HEK293 (cell line): ENCODE measurements at regions of chr17 and their contacts with region 1.

Region 1: DNA sequence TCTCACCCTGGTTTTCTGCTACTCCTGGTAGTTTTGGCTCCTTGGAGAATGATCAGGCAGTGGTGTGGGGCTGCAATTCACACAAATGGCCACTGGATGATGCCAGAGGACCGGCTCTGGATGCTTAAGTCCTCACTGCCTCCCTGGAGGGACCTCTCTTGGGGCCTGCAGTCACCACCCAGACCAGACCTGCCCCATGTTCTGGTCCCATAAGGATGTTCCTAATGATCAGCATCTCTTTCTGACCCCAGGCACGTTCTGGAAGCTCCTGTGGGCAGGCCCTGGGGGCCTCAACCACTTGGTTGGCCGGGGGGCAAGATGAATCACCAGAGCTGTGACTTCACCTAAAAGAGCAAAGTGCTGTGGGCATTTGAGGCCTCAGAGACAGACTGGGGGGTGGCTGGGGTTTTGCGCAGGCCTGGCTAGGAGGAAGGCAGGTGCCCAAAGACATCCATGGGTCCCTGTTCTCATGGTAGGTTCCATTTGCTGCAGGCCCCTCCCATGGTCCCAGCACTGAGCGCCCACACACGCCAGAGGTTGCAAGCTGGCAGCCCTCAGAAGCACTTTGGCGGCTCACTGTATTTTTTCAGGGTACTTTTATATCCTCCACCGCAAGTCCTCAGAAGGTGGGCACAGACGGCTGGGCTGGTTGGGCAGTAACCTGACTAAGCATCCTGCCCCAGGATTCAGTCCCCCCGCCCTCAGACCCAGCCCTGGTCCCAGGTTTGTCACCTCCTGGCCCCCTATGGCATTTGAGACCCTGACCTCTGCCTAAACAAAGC is 53.2 kb downstream of the NT5M start:
- H3K4me3 ChIP-seq: no peak overlapping the region
- H3K27ac ChIP-seq: no peak overlapping the region
- H3K4me1 ChIP-seq: no peaks in the 10 kb centered on the region
- CTCF ChIP-seq: peak; percentile 95

Region 2: DNA sequence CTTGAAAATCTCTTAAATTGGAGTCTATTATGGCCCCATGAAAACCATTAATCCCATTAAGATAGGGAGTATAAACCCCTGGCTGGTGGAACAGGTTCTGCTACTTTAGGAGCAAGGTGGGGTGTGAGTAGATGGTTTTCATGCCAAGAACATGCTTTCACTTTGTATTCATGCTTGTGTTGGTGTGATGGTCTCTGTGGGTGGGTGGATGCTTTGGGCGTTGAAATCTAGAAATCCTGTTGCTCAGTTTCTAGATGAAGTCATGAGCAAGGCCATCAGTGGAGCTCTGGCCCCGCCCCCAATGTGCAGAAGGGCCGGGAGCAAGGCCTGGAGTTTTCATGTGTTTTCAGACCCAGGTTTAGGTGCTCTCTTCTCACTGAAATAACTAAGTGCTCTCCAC is 170.3 kb before region 1 on chr17:
- CTCF ChIA-PET with region 1: no interaction called
- POLR2A ChIA-PET with region 1: no interaction called
- H3K4me3 ChIP-seq: no peak overlapping the region
- H3K27ac ChIP-seq: no peak overlapping the region
- H3K4me1 ChIP-seq: no peaks in the 10 kb centered on the region
- CTCF ChIP-seq: no peak

Region 3: GRCh38 chr17:17344462-17345293 is 11.7 kb before region 1 on chr17:
- CTCF ChIA-PET with region 1: interaction called, 10 read pairs
- POLR2A ChIA-PET with region 1: no interaction called
- H3K4me3 ChIP-seq: no peak overlapping the region
- H3K27ac ChIP-seq: no peak overlapping the region
- H3K4me1 ChIP-seq: no peaks in the 10 kb centered on the region
- CTCF ChIP-seq: no peak

Region 4: GRCh38 chr17:17467720-17468119 is 111.4 kb after region 1 on chr17:
- CTCF ChIA-PET with region 1: interaction called, 13 read pairs
- POLR2A ChIA-PET with region 1: no interaction called
- H3K4me3 ChIP-seq: no peak overlapping the region
- H3K27ac ChIP-seq: 0 out of 2 replicates have a peak overlapping the region, but pooled peaks have one; percentile 2
- H3K4me1 ChIP-seq: 0 out of 2 replicates have a peak, but pooled peaks cover 2% of the 10 kb centered on the region
- CTCF ChIP-seq: no peak

Region 5: DNA sequence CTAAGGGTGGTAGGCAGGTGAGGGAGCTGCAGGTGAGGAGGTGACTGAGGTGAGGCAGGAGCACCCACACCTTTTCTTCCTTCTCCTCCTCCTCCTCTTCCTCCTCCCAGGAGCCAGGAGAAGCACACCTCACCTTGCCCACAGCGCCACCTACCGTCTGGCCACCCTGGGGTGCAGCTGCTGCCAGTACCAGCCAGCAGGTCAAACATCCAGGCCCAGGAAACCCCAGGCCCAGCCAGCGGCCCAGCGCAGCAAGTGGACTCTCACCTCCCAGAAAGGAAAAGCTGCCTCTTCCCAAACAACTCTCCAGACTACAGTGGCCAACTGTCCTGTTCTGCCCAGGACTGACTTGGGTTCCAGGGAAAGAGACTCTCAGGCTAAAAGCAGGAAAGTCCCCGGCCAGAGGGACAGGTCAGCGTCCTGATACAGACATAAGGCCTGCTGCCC is 212.4 kb after region 1 on chr17:
- CTCF ChIA-PET with region 1: interaction called, 79 read pairs
- POLR2A ChIA-PET with region 1: no interaction called
- H3K4me3 ChIP-seq: no peak overlapping the region
- H3K27ac ChIP-seq: no peak overlapping the region
- H3K4me1 ChIP-seq: no peaks in the 10 kb centered on the region
- CTCF ChIP-seq: peak; percentile 81

Region 6: GRCh38 chr17:17591355-17592298 is 235.3 kb after region 1 on chr17 and contains the start of gene PEMT:
- CTCF ChIA-PET with region 1: interaction called, 12 read pairs
- POLR2A ChIA-PET with region 1: interaction called, 5 read pairs
- H3K4me3 ChIP-seq: peak within 1 kb of the TSS; percentile 54
- H3K27ac ChIP-seq: peak within 1 kb of the TSS; percentile 70
- H3K4me1 ChIP-seq: peaks cover 7% of the 10 kb centered on the region; the same call in 1 of the 2 replicates
- CTCF ChIP-seq: no peak

Region 7: DNA sequence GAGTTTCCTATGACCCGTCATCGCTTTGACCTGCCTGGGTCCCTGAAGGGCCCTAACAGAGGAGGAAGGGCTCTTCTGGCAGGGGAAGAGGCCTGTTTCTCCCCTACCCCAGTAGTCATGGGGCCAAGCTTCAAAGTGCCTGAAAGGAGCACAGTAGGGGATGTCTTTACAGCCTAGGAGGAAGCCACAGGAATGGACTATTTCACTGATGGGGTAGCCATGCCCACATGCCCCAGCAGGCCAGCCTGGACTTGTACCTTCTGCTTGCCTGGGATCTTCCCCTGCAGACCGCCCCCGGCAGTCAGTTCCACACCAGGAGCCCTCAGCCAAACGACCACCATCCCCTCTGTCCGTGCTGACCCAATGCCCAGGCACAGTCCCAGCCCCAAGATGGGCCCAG is 277.0 kb after region 1 on chr17:
- CTCF ChIA-PET with region 1: interaction called, 161 read pairs
- POLR2A ChIA-PET with region 1: no interaction called
- H3K4me3 ChIP-seq: no peak overlapping the region
- H3K27ac ChIP-seq: no peak overlapping the region
- H3K4me1 ChIP-seq: no peaks in the 10 kb centered on the region
- CTCF ChIP-seq: no peak

Region 8: GRCh38 chr17:17681187-17681848 is 325.0 kb after region 1 on chr17 and contains the start of gene RAI1:
- CTCF ChIA-PET with region 1: interaction called, 12 read pairs
- POLR2A ChIA-PET with region 1: no interaction called
- H3K4me3 ChIP-seq: peak within 1 kb of the TSS; percentile 76
- H3K27ac ChIP-seq: peak within 1 kb of the TSS; percentile 96
- H3K4me1 ChIP-seq: peaks cover 25% of the 10 kb centered on the region
- CTCF ChIP-seq: no peak